Naive thymus-derived CD4-positive, alpha-beta T cell (primary cell): ENCODE measurements at regions of chr10 and their contacts with region 1.

Region 1: GRCh38 chr10:97759158-97759887 is 12.5 kb downstream of the SFRP5 start:
- DNase-seq: peak in 7 of 9 donors; percentile 23 to 57 (median 38)
- ATAC-seq: peak; percentile 74
- H3K4me3 ChIP-seq: no peak overlapping the region
- H3K4me3 Mint-ChIP-seq: no peak overlapping the region
- H3K27ac ChIP-seq: no peak overlapping the region
- H3K27ac Mint-ChIP-seq: peak overlapping the region in 2 of 9 donors; percentile 21 to 30
- H3K4me1 ChIP-seq: no peaks in the 10 kb centered on the region
- H3K4me1 Mint-ChIP-seq: peaks cover 0 to 4% (median 0%) of the 10 kb centered on the region in 7 donors
- H3K27me3 ChIP-seq: no peaks in the 10 kb centered on the region
- H3K27me3 Mint-ChIP-seq: no peaks in the 10 kb centered on the region

Region 2: DNA sequence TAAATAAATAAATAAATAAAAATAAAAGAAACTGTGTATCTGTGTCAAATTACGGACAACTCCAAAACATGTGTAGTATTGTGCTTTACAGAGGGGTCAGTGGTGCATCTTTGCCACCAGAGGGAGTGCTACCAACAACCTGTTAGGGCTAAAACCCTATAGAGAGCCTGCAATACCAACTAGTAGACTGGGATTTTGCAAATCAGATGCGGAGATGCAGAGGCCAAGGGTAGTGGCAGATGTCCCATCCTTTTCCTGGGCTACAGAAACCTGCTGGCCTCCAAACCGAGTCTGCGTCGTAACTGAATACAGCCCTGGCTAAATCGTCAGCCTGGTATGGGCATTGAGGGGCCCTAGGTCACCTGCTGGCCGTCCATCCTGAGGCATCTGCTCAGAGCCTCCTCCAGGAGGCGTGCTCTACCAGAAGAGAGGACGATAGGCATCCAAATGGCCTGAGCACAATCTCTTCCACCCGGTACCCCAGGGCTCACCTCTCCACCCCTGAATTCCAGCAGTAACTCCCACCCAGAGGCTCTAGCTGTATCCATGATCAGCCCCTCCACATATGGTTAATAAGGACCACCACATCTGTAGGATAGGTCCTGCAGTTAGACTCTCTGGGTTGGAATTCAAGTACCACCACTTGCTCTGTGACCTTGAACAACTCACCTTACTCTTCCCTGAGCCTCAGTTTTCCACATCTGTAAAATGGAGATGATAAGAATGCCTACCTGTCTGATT is 351.9 kb before region 1 on chr10:
- CTCF ChIA-PET with region 1: no interaction called
- POLR2A ChIA-PET with region 1: no interaction called
- intact Hi-C with region 1: no loop called
- DNase-seq: peak; percentile 35 to 78 (median 69)
- ATAC-seq: peak; percentile 96
- H3K4me3 ChIP-seq: peak overlapping the region; percentile 40
- H3K4me3 Mint-ChIP-seq: peak overlapping the region; percentile 10 to 79 (median 52)
- H3K27ac ChIP-seq: peak overlapping the region; percentile 54
- H3K27ac Mint-ChIP-seq: peak overlapping the region in 8 of 9 donors; percentile 14 to 84 (median 44)
- H3K4me1 ChIP-seq: peaks cover 4 to 7% of the 10 kb centered on the region in 2 donors
- H3K4me1 Mint-ChIP-seq: peaks cover 0 to 13% (median 9%) of the 10 kb centered on the region in 7 donors
- H3K27me3 ChIP-seq: no peaks in the 10 kb centered on the region
- H3K27me3 Mint-ChIP-seq: no peaks in the 10 kb centered on the region

Region 3: GRCh38 chr10:97518301-97519043 is 240.9 kb before region 1 on chr10:
- CTCF ChIA-PET with region 1: no interaction called
- POLR2A ChIA-PET with region 1: no interaction called
- intact Hi-C with region 1: no loop called
- DNase-seq: no peak
- ATAC-seq: no peak
- H3K4me3 ChIP-seq: no peak overlapping the region
- H3K4me3 Mint-ChIP-seq: no peak overlapping the region
- H3K27ac ChIP-seq: no peak overlapping the region
- H3K27ac Mint-ChIP-seq: no peak overlapping the region
- H3K4me1 ChIP-seq: no peaks in the 10 kb centered on the region
- H3K4me1 Mint-ChIP-seq: peaks cover 0 to 6% (median 0%) of the 10 kb centered on the region in 7 donors
- H3K27me3 ChIP-seq: no peaks in the 10 kb centered on the region
- H3K27me3 Mint-ChIP-seq: peaks cover 0 to 18% (median 0%) of the 10 kb centered on the region in 5 donors

Region 4: GRCh38 chr10:97798958-97799610 is 39.8 kb after region 1 on chr10:
- CTCF ChIA-PET with region 1: no interaction called
- POLR2A ChIA-PET with region 1: no interaction called
- intact Hi-C with region 1: no loop called
- DNase-seq: no peak
- ATAC-seq: no peak
- H3K4me3 ChIP-seq: no peak overlapping the region
- H3K4me3 Mint-ChIP-seq: no peak overlapping the region
- H3K27ac ChIP-seq: no peak overlapping the region
- H3K27ac Mint-ChIP-seq: peak overlapping the region in 4 of 9 donors; percentile 14 to 85 (median 50)
- H3K4me1 ChIP-seq: peaks cover 15 to 22% of the 10 kb centered on the region in 2 donors
- H3K4me1 Mint-ChIP-seq: peaks cover 16 to 37% (median 31%) of the 10 kb centered on the region in 7 donors
- H3K27me3 ChIP-seq: no peaks in the 10 kb centered on the region
- H3K27me3 Mint-ChIP-seq: peaks cover 0 to 7% (median 0%) of the 10 kb centered on the region in 5 donors

Region 5: DNA sequence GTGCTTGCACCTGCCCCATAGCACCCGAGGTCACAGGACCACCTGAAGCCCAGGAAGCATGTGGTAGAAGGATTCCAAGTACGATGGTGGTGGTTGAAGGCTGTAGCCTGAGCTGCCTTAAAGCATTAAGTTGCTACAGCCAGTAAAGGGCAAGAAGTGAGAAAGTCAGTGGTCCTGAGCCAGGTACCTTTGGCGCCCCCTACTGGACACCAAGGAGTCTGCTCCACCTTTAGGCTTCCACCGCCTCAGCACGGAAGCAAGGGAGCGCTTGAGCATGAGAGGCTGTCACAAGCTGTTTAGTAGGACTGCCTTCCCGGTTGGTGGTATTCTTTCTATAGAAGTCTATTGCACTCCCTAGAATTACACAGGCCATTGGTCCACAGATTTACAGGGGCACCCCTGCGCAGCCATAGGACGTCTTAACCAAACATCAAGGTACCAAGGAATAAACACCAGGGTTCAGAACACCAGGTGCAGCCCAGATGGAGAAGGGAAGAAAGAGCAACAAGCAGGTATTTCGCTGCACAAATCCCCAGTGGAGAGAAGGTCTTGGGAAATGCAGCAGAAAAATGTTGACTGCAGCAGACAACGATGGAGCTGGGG is 268.9 kb after region 1 on chr10:
- CTCF ChIA-PET with region 1: no interaction called
- POLR2A ChIA-PET with region 1: no interaction called
- intact Hi-C with region 1: loop called in 1 of 2 experiments (anchors 10 kb)
- DNase-seq: peak in 8 of 9 donors; percentile 18 to 58 (median 41)
- ATAC-seq: peak; percentile 78
- H3K4me3 ChIP-seq: no peak overlapping the region
- H3K4me3 Mint-ChIP-seq: peak overlapping the region in 5 of 10 donors; percentile 17 to 77 (median 55)
- H3K27ac ChIP-seq: no peak overlapping the region
- H3K27ac Mint-ChIP-seq: peak overlapping the region in 1 of 9 donors; percentile 5
- H3K4me1 ChIP-seq: peaks cover 0 to 4% of the 10 kb centered on the region in 2 donors
- H3K4me1 Mint-ChIP-seq: peaks cover 2 to 19% (median 12%) of the 10 kb centered on the region in 7 donors
- H3K27me3 ChIP-seq: peaks cover 8 to 13% of the 10 kb centered on the region in 2 donors
- H3K27me3 Mint-ChIP-seq: peaks cover 57 to 65% (median 62%) of the 10 kb centered on the region in 5 donors

Region 6: DNA sequence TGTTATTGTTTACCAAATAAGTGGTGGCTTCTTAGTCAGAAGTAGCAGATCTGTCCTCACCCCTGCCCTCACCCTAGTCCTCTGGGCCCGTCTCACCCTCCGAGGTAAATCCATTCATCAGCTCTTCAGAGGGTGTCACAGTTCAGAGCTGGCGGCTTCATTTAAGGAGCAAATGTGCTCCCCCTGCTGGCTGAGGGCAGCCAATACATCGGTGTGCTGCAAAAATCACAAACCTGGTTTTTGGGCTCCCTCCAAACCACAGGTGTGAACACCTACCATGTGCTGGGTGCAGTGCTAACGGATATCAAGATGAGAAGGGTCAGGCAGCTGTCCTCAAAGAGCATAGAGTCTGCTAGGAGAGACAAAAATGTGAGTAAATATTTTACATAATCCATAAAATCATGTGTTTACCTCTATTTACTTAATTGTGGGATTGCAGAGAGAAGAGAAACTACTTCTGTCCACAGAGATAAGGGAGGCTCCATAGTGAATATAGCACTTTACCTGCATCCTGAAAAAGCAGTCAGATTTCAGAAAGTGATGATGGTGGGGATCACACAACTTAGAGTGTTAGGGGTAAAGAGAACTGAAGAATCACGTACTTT is 286.6 kb after region 1 on chr10:
- CTCF ChIA-PET with region 1: no interaction called
- POLR2A ChIA-PET with region 1: no interaction called
- intact Hi-C with region 1: loop called in 1 of 2 experiments (anchors 2 kb)
- DNase-seq: peak; percentile 24 to 62 (median 53)
- ATAC-seq: peak; percentile 84
- H3K4me3 ChIP-seq: no peak overlapping the region
- H3K4me3 Mint-ChIP-seq: no peak overlapping the region
- H3K27ac ChIP-seq: no peak overlapping the region
- H3K27ac Mint-ChIP-seq: no peak overlapping the region
- H3K4me1 ChIP-seq: no peaks in the 10 kb centered on the region
- H3K4me1 Mint-ChIP-seq: peaks cover 0 to 6% (median 4%) of the 10 kb centered on the region in 7 donors
- H3K27me3 ChIP-seq: peaks cover 0 to 6% of the 10 kb centered on the region in 2 donors
- H3K27me3 Mint-ChIP-seq: peaks cover 29 to 41% (median 30%) of the 10 kb centered on the region in 5 donors